ENCODE measurements at regions of chr1 and their contacts with region 1.

Region 1: DNA sequence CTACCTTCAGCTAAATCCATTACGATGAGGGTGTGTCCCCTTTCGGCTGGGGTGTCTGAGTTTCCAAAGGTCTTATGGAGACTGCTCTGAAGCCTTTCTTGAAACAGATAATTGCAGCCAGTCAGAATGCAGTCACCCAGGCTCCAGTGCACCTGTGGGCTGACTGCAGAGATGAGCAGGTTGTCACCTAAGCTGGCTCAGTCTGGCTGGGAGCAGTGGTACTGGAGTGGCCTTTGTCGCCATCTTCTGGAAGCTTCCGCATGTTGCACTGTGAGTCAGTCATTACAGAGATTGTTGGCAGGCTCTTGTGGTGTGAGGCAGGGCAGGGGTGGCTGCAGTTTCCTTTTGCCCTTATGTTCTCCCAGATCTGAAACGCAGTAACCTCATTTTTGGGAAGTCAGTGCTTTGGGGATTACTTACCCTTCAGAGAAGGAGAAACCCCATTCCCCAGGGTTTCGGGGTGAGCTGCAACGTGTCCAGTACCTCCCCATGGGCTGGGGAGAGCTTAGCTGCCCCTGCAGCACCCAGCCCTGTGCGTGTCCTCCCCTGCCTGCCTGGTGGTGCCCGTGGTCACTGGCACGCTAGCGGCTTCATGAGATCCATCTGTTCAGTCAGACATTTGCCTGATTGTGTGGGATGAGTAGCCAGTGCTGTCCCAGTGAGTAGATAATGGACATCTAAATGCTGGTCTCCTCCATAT is 48.0 kb downstream of the SMYD2 start:
- DNase-seq: peak; percentile 90
- H3K4me3 Mint-ChIP-seq: no peak overlapping the region
- H3K27ac Mint-ChIP-seq: no peak overlapping the region
- H3K4me1 Mint-ChIP-seq: no peaks in the 10 kb centered on the region
- H3K27me3 Mint-ChIP-seq: no peaks in the 10 kb centered on the region

Region 2: DNA sequence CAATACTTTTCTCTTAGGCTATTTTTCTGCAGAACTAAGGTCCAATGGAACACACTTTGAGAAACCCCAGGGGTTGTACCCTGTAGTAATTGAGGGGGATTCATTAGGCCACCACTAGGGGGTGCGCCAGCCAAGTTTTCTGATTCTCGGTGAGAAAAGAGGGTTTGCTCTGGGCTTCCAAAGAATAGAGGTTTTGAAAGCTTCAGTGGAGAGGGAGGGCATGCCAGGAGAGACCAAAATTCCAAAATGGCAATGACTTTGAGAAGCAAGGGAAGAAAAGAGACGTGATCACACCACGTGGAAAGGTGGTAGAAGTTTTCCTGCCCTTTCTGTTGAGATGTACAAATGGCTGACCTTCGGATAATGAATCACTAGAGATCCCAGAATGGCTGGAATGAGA is 954.6 kb before region 1 on chr1:
- CTCF ChIA-PET with region 1: no interaction called
- intact Hi-C with region 1: loop called (anchors 2 kb)
- DNase-seq: peak; percentile 78
- H3K4me3 Mint-ChIP-seq: no peak overlapping the region
- H3K27ac Mint-ChIP-seq: no peak overlapping the region
- H3K4me1 Mint-ChIP-seq: no peaks in the 10 kb centered on the region
- H3K27me3 Mint-ChIP-seq: no peaks in the 10 kb centered on the region

Region 3: DNA sequence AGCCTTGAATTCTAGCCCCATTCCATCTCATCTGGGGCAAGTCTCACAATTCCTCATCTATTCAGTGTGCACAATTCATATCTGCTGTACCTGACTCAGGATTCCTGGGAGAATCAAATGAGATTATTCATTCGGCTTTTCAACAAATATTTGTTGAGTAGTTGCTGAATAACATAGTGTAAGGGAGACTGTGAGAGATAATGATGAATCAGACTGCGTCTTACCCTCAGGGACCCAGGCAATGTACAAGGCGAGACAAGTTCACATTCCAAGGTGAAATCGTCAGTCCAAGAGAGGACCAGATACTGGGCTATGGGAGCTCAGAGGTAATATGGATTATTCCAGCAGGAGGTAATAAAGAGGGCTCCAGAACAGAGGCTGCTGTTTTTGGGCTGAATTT is 115.8 kb before region 1 on chr1:
- CTCF ChIA-PET with region 1: interaction called, 86 read pairs
- intact Hi-C with region 1: loop called (anchors 1 kb)
- DNase-seq: no peak
- H3K4me3 Mint-ChIP-seq: no peak overlapping the region
- H3K27ac Mint-ChIP-seq: no peak overlapping the region
- H3K4me1 Mint-ChIP-seq: peaks cover 3% of the 10 kb centered on the region
- H3K27me3 Mint-ChIP-seq: peaks cover 2% of the 10 kb centered on the region

Region 4: GRCh38 chr1:214310010-214310409 is 18.9 kb before region 1 on chr1:
- CTCF ChIA-PET with region 1: interaction called, 17 read pairs
- intact Hi-C with region 1: no loop called
- DNase-seq: peak; percentile 12
- H3K4me3 Mint-ChIP-seq: no peak overlapping the region
- H3K27ac Mint-ChIP-seq: no peak overlapping the region
- H3K4me1 Mint-ChIP-seq: peaks cover 30% of the 10 kb centered on the region
- H3K27me3 Mint-ChIP-seq: no peaks in the 10 kb centered on the region

Region 5: GRCh38 chr1:214439352-214440119 is 110.6 kb after region 1 on chr1:
- CTCF ChIA-PET with region 1: interaction called, 4 read pairs
- intact Hi-C with region 1: loop called (anchors 2 kb)
- DNase-seq: peak; percentile 85
- H3K4me3 Mint-ChIP-seq: peak overlapping the region; percentile 16
- H3K27ac Mint-ChIP-seq: peak overlapping the region; percentile 93
- H3K4me1 Mint-ChIP-seq: peaks cover 49% of the 10 kb centered on the region
- H3K27me3 Mint-ChIP-seq: peaks cover 2% of the 10 kb centered on the region

Region 6: GRCh38 chr1:214632091-214632490 is 303.2 kb after region 1 on chr1:
- CTCF ChIA-PET with region 1: interaction called, 12 read pairs
- intact Hi-C with region 1: loop called (anchors 1 kb)
- DNase-seq: no peak
- H3K4me3 Mint-ChIP-seq: no peak overlapping the region
- H3K27ac Mint-ChIP-seq: no peak overlapping the region
- H3K4me1 Mint-ChIP-seq: peaks cover 22% of the 10 kb centered on the region
- H3K27me3 Mint-ChIP-seq: no peaks in the 10 kb centered on the region

Region 7: GRCh38 chr1:214739621-214740238 is 410.8 kb after region 1 on chr1:
- CTCF ChIA-PET with region 1: no interaction called
- intact Hi-C with region 1: no loop called
- DNase-seq: no peak
- H3K4me3 Mint-ChIP-seq: no peak overlapping the region
- H3K27ac Mint-ChIP-seq: no peak overlapping the region
- H3K4me1 Mint-ChIP-seq: peaks cover 5% of the 10 kb centered on the region
- H3K27me3 Mint-ChIP-seq: no peaks in the 10 kb centered on the region

Region 8: DNA sequence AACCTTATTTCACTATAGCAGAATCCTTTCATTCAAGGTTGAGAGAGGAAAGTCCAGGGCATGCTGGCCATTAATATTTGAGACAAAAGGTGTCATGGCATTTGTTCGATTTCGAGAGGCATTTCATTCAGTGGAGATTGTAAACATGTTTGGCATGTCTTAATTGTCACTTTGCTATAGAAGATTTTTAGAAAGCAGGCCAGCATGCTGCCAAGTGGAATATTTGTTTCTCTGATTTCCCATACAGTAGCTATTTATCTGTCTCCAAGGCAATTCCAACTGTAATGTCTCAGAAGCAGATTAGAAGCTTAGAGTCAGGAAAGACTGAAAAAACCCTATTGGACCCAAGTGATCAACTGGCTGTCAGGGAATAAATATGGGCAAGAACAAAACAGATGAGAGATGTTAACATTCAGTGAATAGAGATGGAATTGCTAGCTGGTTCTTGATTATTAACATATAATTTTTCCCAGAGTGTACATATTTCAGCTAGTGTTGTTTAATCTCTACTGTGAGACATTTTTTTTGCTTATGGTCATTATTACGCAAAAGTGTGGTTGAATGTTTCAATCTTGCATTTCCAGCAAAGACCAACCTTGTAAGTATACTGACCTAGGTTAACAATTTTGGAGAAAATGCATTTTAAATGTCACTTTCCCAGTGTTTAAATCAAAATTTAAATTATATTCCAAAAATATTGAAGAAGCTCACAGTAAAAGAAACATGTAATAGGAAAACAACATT is 928.2 kb after region 1 on chr1:
- CTCF ChIA-PET with region 1: no interaction called
- intact Hi-C with region 1: no loop called
- DNase-seq: no peak
- H3K4me3 Mint-ChIP-seq: no peak overlapping the region
- H3K27ac Mint-ChIP-seq: no peak overlapping the region
- H3K4me1 Mint-ChIP-seq: no peaks in the 10 kb centered on the region
- H3K27me3 Mint-ChIP-seq: peaks cover 9% of the 10 kb centered on the region

Region 9: GRCh38 chr1:215526553-215527151 is 1197.7 kb after region 1 on chr1:
- CTCF ChIA-PET with region 1: interaction called, 3 read pairs
- intact Hi-C with region 1: loop called (anchors 2 kb)
- DNase-seq: no peak
- H3K4me3 Mint-ChIP-seq: no peak overlapping the region
- H3K27ac Mint-ChIP-seq: no peak overlapping the region
- H3K4me1 Mint-ChIP-seq: peaks cover 1% of the 10 kb centered on the region
- H3K27me3 Mint-ChIP-seq: peaks cover 7% of the 10 kb centered on the region

Measured in activated naive CD4-positive, alpha-beta T cell treated with anti-CD3 and anti-CD28 coated beads for 36 hours (primary cell).